ENCODE measurements at regions of chr22 and their contacts with region 1.

Region 1: GRCh38 chr22:46309526-46310085 is 12.9 kb downstream of the GTSE1 start:
- DNase-seq: no peak
- CTCF ChIP-seq: no peak

Region 2: DNA sequence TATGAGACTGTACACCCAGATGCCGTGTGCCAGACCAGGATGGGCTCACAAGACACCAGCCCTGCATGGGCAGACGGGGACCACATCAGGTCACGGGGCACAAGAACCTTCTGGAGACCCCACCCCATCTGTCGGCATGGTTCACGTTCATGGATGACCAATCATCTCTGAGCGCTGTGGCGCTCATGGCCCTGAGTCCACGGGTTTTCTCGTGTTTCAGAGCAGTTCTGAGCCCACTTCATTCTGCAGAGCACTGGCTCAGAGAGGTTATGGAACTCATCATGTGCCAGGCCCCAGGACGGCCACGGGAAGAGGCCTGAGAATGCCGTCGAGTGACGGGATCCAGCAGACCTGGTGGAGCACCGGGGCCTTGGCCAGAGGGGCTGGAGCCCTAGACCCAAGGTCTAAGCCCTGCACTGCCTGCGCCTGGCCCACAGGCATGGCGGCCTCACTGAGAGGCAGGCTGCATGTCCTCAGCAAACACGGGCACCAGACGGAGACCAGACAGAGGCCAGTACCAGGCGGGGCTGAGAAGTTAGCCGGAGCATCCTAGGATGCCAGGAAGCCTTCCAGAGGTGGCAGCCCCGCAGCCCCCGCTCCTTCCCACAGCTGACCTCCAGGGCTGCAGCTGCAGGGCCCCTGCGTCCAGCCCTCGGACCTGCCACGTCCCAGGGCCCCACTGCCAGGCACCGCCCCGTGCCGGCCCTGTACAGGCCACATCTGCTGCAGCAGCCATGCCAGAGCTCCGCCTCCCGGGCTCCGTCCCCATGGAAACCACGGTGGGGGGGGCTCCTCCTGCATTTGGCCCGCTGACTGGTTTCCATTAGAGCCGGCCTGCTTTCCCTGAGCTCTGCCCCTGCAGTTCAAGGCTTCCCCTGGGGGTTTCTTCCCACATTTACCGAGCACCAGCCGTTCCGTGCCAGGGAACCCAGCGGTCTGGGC is 222.0 kb before region 1 on chr22:
- CTCF ChIA-PET with region 1: no interaction called
- POLR2A ChIA-PET with region 1: no interaction called
- DNase-seq: no peak
- CTCF ChIP-seq: no peak

Region 3: DNA sequence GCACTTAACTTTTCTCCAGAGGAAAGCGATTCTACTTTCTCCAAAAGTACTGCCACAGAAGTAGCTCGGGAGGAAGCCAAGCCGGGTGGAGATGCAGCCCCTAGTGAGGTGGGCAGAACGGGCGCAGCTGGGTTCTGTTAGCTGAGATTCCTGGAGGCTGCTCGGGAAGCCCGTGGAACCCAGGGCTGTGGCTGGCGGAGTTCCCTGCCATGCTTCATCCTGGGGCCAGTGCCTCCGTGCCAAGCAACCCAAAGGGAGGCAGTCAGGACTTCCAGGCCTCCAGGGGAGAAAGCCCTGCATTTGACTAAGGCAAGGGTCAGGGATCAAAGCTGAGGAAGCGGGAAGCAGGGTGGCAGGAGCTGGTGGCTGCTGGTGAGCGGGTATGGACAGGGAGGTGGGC is 19.2 kb after region 1 on chr22:
- CTCF ChIA-PET with region 1: interaction called, 10 read pairs
- POLR2A ChIA-PET with region 1: no interaction called
- DNase-seq: no peak
- CTCF ChIP-seq: no peak

Measured in GM10248 (cell line).